Activated CD8-positive, alpha-beta memory T cell treated with anti-CD3 and anti-CD28 coated beads, Interleukin-2, amount 10 ng/mL, durations not matched to agents 7 days and 5 days (primary cell): ENCODE measurements at regions of chr7 and their contacts with region 1.

Region 1: GRCh38 chr7:141014524-141015395 is at the start of gene MRPS33:
- DNase-seq: peak; percentile 97
- ATAC-seq: peak; percentile 97
- H3K4me3 Mint-ChIP-seq: peak within 1 kb of the TSS; percentile 93
- H3K27ac Mint-ChIP-seq: peak within 1 kb of the TSS; percentile 99
- H3K4me1 Mint-ChIP-seq: peaks cover 32% of the 10 kb centered on the region
- H3K27me3 Mint-ChIP-seq: peaks cover 19% of the 10 kb centered on the region
- total RNA-seq, gene MRPS33: 51.6 to 70.8 TPM

Region 2: GRCh38 chr7:140517546-140518369 is 497.0 kb before region 1 on chr7:
- CTCF ChIA-PET with region 1: interaction called, 14 read pairs
- DNase-seq: peak; percentile 78
- ATAC-seq: peak; percentile 79
- H3K4me3 Mint-ChIP-seq: no peak overlapping the region
- H3K27ac Mint-ChIP-seq: no peak overlapping the region
- H3K4me1 Mint-ChIP-seq: peaks cover 4% of the 10 kb centered on the region
- H3K27me3 Mint-ChIP-seq: peaks cover 28% of the 10 kb centered on the region

Region 3: DNA sequence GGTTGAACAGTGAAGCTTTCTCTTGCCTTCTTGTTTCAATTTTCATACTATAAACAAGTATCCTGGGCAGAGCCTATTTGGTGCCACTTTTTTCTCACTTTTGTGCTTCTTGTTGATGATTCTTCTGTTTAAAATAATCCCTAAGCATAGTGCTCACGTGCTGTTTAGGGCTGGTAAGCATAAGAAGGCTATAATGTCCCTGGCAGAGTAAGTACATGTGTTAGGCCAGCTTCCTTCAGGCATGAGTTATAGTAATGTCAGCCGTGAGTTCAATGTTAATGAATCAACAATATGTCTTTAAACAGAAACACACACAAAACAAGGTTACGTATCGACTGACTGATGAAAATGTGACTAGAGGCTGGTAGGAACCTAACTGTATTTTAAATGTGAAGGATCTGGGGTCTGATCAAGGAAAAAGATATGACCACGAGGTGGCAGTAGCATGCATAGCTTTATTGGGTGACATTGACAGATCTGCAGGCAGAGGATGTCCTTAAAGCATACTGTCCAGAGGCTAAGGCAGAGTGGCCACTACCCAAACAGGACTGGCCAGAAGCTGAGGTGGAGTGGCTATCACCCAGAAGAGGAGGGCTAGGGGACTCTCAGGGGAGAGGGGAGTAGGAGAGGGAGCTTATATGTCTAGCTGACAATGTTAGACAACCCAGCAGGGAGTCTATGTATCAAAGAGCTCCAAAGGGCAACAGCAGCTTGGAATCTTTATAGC is 203.8 kb before region 1 on chr7:
- CTCF ChIA-PET with region 1: interaction called, 33 read pairs
- DNase-seq: peak; percentile 69
- ATAC-seq: peak; percentile 75
- H3K4me3 Mint-ChIP-seq: no peak overlapping the region
- H3K27ac Mint-ChIP-seq: peak overlapping the region; percentile 64
- H3K4me1 Mint-ChIP-seq: peaks cover 1% of the 10 kb centered on the region
- H3K27me3 Mint-ChIP-seq: no peaks in the 10 kb centered on the region

Region 4: DNA sequence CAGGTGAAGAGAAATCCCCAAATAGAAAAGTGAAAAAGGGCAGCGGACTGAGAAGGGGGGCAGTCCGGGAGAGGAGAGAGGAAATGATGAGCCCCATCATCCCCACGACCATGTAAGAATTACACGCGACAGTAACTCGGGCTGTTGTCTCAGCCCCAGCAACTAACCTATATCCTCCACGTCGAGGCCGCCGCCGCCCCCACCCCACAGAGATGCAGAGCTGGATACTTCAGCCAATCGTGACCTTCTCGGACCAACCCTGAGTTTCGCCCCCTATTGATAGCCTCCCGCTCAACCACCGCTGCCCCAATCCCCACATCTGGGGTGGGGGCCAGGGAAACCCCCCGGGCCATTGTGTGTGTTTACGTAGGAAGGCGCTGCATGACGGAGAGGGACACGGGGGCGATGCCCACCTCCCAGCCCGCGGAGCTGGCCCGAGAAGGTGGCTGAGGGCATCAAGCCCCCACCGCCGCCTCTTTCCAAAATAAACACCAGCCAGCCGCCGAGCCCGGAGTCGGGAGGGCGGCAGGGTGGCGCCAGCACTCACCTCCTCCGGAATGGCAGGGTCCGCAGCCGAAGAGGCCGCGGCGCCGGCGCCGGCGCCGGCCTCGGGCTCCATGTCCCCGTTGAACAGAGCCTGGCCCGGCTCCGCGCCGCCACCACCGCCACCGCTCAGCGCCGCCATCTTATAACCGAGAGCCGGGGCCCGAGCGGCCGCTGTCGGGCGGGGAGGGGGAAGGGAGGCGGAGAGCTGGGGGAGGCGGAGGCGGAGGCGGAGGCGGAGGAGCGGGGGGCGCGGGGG is 90.5 kb before region 1 on chr7:
- CTCF ChIA-PET with region 1: interaction called, 23 read pairs
- DNase-seq: peak; percentile 83
- ATAC-seq: peak; percentile 82
- H3K4me3 Mint-ChIP-seq: no peak overlapping the region
- H3K27ac Mint-ChIP-seq: no peak overlapping the region
- H3K4me1 Mint-ChIP-seq: peaks cover 11% of the 10 kb centered on the region
- H3K27me3 Mint-ChIP-seq: peaks cover under 1% of the 10 kb centered on the region

Region 5: GRCh38 chr7:141097430-141097829 is 82.7 kb after region 1 on chr7:
- CTCF ChIA-PET with region 1: no interaction called
- DNase-seq: no peak
- ATAC-seq: no peak
- H3K4me3 Mint-ChIP-seq: no peak overlapping the region
- H3K27ac Mint-ChIP-seq: no peak overlapping the region
- H3K4me1 Mint-ChIP-seq: no peaks in the 10 kb centered on the region
- H3K27me3 Mint-ChIP-seq: peaks cover 5% of the 10 kb centered on the region